ENCODE measurements at regions of chr11 and their contacts with region 1.

Region 1: DNA sequence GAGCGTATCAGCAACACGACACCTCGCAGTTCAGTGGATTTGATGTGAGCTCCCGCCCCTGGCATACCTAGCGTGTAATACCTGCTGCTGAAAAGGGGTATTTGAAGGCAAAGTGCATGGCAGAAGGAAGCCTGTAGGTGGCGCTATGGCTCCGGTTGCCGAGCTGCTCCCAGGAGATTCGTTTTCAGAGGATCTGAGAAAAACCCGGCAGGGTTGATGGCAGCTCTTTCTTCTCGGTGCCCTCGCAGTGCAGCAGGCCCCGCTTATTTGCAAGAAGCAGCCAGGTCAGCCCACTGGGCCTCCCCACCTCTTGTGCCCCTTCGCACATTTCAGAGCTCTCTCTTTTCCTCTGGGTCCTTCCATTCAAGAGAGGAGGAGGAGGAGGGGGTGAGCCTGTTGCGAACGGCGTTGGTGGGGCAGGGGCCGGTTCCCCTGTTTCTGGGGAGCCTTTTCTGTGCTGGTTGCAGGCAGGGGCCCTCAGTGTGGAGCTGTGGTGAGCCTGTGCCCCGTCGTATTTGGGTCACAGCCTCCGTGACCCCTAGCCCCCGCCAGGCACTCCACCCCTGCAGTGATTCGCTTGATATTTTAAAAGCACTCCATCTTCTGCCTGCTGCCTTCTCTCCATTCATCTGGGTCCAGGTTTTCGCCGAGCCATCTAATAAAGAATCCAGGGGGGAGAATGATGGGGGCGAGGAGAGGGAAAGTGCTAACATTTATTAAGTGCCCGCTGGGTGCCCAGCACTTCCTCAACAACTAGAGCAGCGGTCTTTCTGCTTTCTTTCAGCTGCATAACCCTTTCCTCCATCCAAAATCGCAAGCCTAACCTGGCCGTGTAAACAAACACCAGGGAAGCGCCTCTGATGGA is 85.3 kb upstream of the SYT13 start:
- DNase-seq: peak; percentile 45 to 82 (median 71)
- H3K4me3 ChIP-seq: no peak overlapping the region
- H3K27ac ChIP-seq: no peak overlapping the region
- H3K4me1 ChIP-seq: no peaks in the 10 kb centered on the region
- H3K27me3 ChIP-seq: no peaks in the 10 kb centered on the region
- CTCF ChIP-seq: peak; percentile 52 to 70 (median 58)
- EP300 ChIP-seq: no peak
- POLR2A ChIP-seq: no peak

Region 2: DNA sequence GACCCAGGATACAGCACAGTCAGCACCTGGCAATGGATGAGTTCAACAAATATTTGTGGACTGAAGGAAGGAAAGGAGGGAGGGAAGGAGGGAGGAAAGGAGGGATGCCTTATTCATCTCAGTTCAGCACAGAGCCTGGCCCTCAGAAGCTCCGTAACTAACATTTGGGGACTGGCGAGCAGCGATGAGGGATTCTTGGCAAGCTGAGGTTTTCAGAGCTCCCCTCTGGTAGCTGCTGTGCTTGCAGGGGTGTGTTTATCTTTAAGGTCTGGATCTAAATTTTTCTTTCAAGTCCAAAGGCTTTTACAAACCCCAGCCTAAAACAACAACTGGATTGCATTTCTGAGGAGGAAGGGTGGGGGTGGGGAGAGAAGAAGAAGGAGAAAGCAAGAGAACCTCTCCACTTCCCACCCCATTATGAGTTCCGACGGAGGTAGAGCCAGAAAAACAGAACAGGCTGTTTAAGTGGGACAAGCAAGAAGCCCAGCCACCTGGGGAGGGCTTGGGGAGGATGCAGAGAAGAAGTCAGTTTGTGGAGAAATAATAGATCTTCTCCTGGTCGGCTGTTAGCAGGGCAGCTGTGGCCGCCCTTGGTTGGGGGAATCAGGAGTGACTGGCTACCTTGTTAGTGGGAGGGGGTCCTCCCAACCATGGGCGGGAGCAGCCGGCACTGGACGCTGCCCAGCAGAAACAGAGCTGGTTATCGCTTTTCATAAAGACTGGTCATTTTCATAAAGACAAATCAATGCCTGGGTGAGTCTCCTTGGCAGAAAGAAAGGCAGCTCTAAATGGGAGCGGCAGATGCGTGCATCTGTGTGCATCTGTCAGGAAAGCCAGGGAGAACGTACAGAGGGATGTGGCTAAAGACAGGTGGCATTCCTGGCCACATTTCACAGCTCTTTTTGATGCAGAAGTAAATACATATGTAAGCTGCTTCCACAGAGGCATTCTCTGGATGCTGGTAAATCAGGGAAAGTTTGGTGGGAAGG is 566.7 kb before region 1 on chr11:
- intact Hi-C with region 1: no loop called
- DNase-seq: no peak
- H3K4me3 ChIP-seq: no peak overlapping the region
- H3K27ac ChIP-seq: peak overlapping the region in 1 of 2 donors; percentile 12
- H3K4me1 ChIP-seq: no peaks in the 10 kb centered on the region
- H3K27me3 ChIP-seq: no peaks in the 10 kb centered on the region
- CTCF ChIP-seq: no peak
- EP300 ChIP-seq: no peak
- POLR2A ChIP-seq: no peak

Region 3: DNA sequence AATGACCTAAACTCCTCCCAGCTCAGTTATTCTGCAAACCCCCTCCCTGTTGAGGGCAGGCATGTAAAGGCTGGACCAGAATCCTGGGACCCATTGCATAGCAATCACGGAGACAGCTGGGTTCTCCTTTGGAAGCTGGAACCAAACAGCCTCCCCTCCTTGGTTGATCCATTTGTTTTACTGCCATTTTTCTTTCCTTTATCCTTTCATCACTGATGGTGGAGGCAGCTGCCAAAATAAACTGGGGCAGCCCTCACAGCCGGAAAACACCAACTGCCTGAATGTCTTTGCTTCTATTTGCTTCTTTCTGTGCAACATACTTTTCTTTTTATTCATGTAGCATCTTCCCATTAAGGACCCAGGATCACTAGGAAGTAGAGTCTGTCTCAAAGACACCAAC is 64.6 kb after region 1 on chr11:
- intact Hi-C with region 1: no loop called
- DNase-seq: no peak
- H3K4me3 ChIP-seq: no peak overlapping the region
- H3K27ac ChIP-seq: no peak overlapping the region
- H3K4me1 ChIP-seq: no peaks in the 10 kb centered on the region
- H3K27me3 ChIP-seq: no peaks in the 10 kb centered on the region
- CTCF ChIP-seq: no peak
- EP300 ChIP-seq: no peak
- POLR2A ChIP-seq: no peak

Region 4: DNA sequence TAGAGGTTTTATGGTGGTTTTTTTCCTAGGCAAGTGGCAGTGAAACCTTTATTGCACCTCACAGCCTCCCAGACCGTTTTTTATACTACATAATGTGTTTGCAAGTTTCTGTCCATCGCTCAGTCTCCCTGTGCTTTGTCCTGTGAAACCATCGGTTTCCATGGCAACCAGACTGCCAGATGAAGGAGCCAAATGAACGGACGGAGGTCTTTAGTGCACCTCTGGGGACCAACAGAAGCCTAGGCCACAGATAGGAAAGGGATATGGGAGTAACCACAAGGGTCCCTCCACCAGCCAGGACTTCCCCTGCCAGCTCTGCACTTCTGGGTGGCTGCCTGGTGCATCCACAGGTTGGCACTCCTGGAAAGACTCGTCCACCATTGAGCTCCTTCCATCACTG is 129.0 kb after region 1 on chr11:
- intact Hi-C with region 1: no loop called
- DNase-seq: no peak
- H3K4me3 ChIP-seq: no peak overlapping the region
- H3K27ac ChIP-seq: no peak overlapping the region
- H3K4me1 ChIP-seq: no peaks in the 10 kb centered on the region
- H3K27me3 ChIP-seq: no peaks in the 10 kb centered on the region
- CTCF ChIP-seq: no peak
- EP300 ChIP-seq: no peak
- POLR2A ChIP-seq: no peak

Region 5: GRCh38 chr11:45765836-45766235 is 394.4 kb after region 1 on chr11:
- intact Hi-C with region 1: loop called (anchors 10 kb)
- DNase-seq: no peak
- H3K4me3 ChIP-seq: no peak overlapping the region
- H3K27ac ChIP-seq: no peak overlapping the region
- H3K4me1 ChIP-seq: no peaks in the 10 kb centered on the region
- H3K27me3 ChIP-seq: no peaks in the 10 kb centered on the region
- CTCF ChIP-seq: no peak
- EP300 ChIP-seq: no peak
- POLR2A ChIP-seq: no peak

Region 6: GRCh38 chr11:45771566-45772448 is 400.3 kb after region 1 on chr11:
- intact Hi-C with region 1: loop called (anchors 10 kb)
- DNase-seq: peak; percentile 77 to 89 (median 84)
- H3K4me3 ChIP-seq: peak overlapping the region; percentile 36
- H3K27ac ChIP-seq: peak overlapping the region; percentile 17 to 56
- H3K4me1 ChIP-seq: no peaks in the 10 kb centered on the region
- H3K27me3 ChIP-seq: no peaks in the 10 kb centered on the region
- CTCF ChIP-seq: peak; percentile 86 to 91 (median 87)
- EP300 ChIP-seq: no peak
- POLR2A ChIP-seq: no peak

Measured in ovary (tissue), 10 donors.